Calu3 (cell line): ENCODE measurements at regions of chrX and their contacts with region 1.

Region 1: DNA sequence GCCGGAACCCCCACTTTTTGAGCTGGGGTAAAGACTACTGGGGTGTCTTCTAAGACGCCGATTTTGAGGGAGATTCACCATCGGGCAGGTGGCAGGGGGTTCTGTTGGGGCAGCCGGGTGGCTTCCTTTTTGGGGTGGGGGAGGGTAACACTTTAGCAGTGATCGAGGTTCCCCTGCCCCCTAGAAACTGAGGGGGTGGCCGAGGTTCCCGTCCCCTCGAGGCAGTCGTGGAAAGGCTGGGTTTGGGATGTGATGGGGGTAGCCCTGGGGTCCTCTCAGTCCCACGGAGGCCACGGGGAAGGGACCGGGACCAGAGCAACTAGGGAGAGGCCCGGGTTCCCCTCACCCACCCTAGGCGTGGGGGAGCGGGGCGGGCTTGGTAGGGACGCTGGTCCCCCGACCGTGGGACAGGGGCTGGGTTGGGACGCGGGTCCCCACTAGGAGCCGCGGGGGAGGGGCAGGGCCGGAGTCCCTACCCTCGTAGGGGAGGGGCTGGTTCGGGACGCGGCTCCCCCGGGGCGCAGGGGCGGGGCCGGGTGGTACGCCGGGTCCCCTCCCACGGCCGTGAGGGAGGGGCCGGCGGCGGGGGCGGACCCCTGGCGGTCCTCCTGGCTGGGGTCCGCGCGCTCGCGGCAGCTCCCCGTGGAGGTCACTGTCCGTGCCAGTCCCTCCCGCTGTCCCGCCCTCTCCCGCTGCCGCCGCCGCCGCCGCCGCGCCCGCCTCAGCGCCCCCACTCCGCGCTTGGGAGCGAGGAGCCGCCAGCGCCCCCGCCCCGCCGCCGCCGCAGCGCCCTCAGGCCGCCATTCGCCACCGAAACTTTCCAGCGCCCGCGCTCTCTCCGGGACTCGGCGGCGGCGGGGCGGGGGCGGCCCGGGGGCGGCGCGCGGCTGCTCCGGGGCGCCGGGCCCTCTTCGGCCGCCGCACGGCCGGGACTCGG is at the start of gene TBL1X:
- DNase-seq: peak; percentile 74
- H3K4me3 Mint-ChIP-seq: peak within 1 kb of the TSS; percentile 67
- H3K27ac Mint-ChIP-seq: peak within 1 kb of the TSS; percentile 96
- H3K4me1 Mint-ChIP-seq: peaks cover 33% of the 10 kb centered on the region
- H3K27me3 Mint-ChIP-seq: no peaks in the 10 kb centered on the region
- CTCF ChIP-seq: no peak
- total RNA-seq, gene TBL1X: 24.9 and 25.0 TPM in 2 replicates

Region 2: DNA sequence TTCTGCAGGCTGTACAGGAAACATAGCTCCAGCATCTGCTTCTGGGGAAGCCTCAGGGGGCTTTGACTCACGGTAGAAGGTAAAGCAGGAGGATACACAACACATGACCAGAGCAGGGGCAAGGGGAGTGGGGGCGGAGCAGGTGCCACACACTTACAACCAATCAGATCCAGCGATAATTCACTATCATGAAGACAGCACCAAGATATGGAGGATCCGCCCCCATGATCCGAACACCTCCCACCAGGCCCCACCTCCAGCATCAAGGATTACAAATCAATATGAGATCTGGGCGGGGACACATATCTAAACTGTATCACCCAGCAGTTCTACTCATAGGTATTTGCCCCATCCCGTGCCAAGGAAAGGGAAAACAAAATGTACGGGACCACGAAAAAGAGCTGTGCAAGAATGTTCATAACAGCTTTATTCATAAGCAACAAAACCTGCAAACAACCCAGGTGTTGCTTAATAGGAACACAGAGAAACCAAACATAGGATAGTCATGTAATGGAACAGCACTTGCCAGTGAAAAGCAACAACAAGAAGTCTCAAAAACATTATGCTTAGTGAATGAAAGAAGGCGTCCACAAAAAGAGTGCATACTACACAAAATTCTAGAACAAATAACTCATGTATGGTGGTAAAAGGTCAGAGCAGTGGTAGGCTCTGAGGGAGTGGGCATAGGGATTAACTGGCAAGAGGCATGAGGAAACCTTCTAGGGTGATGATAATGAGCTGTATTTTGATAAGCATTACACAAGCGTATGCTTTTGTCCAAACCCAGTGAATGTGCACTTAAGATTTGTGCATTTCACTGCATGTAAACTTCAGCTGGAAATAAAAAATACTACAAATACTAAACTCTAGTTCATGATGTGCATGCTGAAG is 299.9 kb before region 1 on chrX:
- CTCF ChIA-PET with region 1: no interaction called
- intact Hi-C with region 1: loop called (anchors 2 kb)
- DNase-seq: peak; percentile 72
- H3K4me3 Mint-ChIP-seq: peak overlapping the region; percentile 56
- H3K27ac Mint-ChIP-seq: peak overlapping the region; percentile 95
- H3K4me1 Mint-ChIP-seq: peaks cover 44% of the 10 kb centered on the region
- H3K27me3 Mint-ChIP-seq: no peaks in the 10 kb centered on the region
- CTCF ChIP-seq: no peak

Region 3: GRCh38 chrX:9494771-9495170 is 30.1 kb after region 1 on chrX:
- CTCF ChIA-PET with region 1: no interaction called
- intact Hi-C with region 1: no loop called
- DNase-seq: no peak
- H3K4me3 Mint-ChIP-seq: no peak overlapping the region
- H3K27ac Mint-ChIP-seq: no peak overlapping the region
- H3K4me1 Mint-ChIP-seq: peaks cover 8% of the 10 kb centered on the region
- H3K27me3 Mint-ChIP-seq: no peaks in the 10 kb centered on the region
- CTCF ChIP-seq: no peak

Region 4: DNA sequence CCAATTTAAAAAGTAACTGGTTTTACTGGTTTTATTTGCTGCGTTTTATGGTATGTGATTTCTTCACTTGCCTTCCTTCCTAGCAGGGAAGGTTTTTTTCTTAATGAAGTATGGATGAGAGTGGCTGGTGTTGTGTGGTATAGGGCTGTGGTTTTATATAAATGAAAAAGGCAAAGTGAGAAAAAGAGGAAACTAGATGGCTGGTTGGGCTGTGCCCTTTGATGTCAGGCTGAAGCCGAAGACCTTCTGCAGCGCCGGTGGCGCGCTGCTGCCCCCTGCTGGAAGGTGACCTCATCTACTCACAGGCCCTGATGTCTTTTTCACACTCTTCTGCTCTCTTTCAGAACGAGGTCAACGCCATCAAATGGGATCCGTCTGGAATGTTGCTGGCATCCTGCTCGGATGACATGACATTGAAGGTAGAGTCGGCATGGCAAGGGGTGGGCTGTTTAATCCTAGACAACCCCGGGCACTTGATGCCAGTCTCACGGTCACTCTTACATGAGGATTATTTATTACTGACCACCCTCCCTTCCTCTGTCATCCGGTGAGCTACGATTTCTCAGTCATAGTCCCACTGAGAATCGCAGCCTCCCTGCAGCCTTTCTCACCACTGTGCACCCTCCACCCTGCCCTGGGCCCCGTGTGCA is 244.3 kb after region 1 on chrX:
- CTCF ChIA-PET with region 1: no interaction called
- intact Hi-C with region 1: loop called (anchors 5 kb)
- DNase-seq: peak; percentile 74
- H3K4me3 Mint-ChIP-seq: peak overlapping the region; percentile 32
- H3K27ac Mint-ChIP-seq: peak overlapping the region; percentile 83
- H3K4me1 Mint-ChIP-seq: peaks cover 14% of the 10 kb centered on the region
- H3K27me3 Mint-ChIP-seq: no peaks in the 10 kb centered on the region
- CTCF ChIP-seq: peak; percentile 78